ENCODE measurements at regions of chr1 and their contacts with region 1.

Region 1: DNA sequence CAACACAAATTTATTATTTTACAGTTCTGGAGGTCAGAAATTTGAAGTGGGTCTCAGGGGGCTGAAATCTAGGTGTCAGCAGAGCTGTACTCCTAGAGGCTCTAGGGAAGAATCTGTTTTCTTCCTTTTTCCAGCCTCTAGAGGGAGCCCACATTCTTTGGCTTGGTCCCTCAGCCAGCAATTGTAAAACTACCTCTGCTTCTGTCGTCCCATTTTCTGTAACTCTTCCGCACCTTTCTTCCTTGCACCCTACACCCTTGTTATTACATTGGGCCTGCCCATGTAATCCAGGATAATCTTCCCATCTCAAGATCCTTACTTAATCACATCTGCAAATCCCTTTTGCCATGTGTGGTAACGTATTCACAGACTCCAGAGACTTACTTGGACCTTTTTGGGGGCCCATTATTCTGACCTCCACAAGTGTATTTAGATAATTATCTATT is 24.8 kb upstream of the THEM4 start:
- DNase-seq: peak; percentile 88
- ATAC-seq: peak; percentile 75
- H3K4me3 ChIP-seq: no peak overlapping the region
- H3K27ac ChIP-seq: no peak overlapping the region
- H3K4me1 ChIP-seq: peaks cover 27% of the 10 kb centered on the region
- H3K27me3 ChIP-seq: no peaks in the 10 kb centered on the region
- CTCF ChIP-seq: peak; percentile 96

Region 2: DNA sequence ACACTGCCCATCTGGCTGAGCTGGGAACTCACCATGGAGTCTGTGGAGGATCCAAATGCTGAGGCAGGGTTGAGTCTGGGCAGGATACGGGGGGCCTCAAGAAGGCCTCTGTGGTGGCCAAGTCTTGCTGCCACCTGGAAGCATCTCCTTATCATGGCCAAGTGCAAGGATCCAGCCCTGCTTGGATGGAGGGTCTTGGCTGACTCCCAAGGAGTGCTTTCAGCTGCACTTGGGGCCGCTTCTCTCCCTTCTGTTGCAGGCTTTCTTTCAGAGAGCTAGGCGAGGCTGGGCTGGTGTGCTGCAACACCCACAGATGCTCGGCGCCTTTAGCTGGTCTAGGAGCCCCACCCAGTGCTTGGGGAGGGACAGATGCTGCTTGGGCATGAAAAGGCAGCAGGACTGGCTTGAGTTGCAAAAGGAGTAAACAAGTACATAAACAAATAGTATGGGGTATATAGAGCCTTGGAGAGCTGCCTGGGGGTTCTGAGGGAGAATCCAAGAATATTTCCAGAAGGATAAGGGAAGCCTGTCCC is 80.6 kb before region 1 on chr1 and contains the start of gene THEM5:
- CTCF ChIA-PET with region 1: no interaction called
- POLR2A ChIA-PET with region 1: no interaction called
- intact Hi-C with region 1: no loop called
- DNase-seq: no peak
- ATAC-seq: no peak
- H3K4me3 ChIP-seq: no peak within 1 kb of the TSS
- H3K27ac ChIP-seq: no peak within 1 kb of the TSS
- H3K4me1 ChIP-seq: no peaks in the 10 kb centered on the region
- H3K27me3 ChIP-seq: peaks cover 18% of the 10 kb centered on the region
- CTCF ChIP-seq: no peak
- total RNA-seq, gene THEM5: not detected in 2 replicates

Region 3: GRCh38 chr1:151888972-151889570 is 45.0 kb before region 1 on chr1:
- CTCF ChIA-PET with region 1: no interaction called
- POLR2A ChIA-PET with region 1: no interaction called
- intact Hi-C with region 1: loop called (anchors 1 kb)
- DNase-seq: peak; percentile 62
- ATAC-seq: peak; percentile 36; the same call in 1 of the 2 replicates
- H3K4me3 ChIP-seq: no peak overlapping the region
- H3K27ac ChIP-seq: no peak overlapping the region
- H3K4me1 ChIP-seq: peaks cover 26% of the 10 kb centered on the region
- H3K27me3 ChIP-seq: no peaks in the 10 kb centered on the region
- CTCF ChIP-seq: peak; percentile 73

Region 4: DNA sequence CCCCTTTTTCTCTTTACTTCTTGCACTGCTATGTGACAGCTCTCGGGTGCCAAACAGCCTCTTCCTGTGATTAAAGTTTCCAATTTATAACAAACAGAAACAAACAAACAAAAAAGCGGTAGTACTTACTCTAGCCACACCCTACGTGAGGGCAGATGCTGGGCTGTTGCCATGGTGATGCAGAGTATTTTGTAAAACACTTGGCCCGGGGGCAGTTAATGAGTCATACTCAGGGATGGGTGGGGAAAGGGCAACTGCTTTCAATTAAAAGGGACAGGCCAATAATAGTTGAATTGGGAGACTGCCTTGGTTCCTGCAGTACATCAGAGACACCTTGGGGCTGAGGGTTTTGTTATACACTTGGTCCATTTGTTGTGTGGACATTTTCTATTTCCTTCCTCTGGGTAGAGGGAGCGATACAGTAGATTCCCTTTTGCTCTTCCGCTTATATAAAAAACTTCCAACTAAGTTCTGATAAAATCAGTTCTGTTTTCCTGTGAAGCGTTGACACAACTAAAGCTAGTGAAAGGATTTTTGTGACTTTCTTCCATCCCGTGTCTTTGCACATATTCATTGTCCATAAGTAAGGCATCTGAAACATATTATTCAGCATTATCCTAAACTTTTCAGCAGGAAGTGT is 11.8 kb after region 1 on chr1:
- CTCF ChIA-PET with region 1: interaction called, 8 read pairs
- POLR2A ChIA-PET with region 1: interaction called, 5 read pairs
- intact Hi-C with region 1: loop called (anchors 1 kb)
- DNase-seq: peak; percentile 100
- ATAC-seq: peak; percentile 76
- H3K4me3 ChIP-seq: peak overlapping the region; percentile 56
- H3K27ac ChIP-seq: peak overlapping the region; percentile 96
- H3K4me1 ChIP-seq: peaks cover 51% of the 10 kb centered on the region
- H3K27me3 ChIP-seq: no peaks in the 10 kb centered on the region
- CTCF ChIP-seq: no peak

Region 5: GRCh38 chr1:151968058-151968457 is 34.0 kb after region 1 on chr1:
- CTCF ChIA-PET with region 1: interaction called, 32 read pairs
- POLR2A ChIA-PET with region 1: interaction called, 5 read pairs
- intact Hi-C with region 1: loop called (anchors 1 kb)
- DNase-seq: peak; percentile 89
- ATAC-seq: peak; percentile 48
- H3K4me3 ChIP-seq: no peak overlapping the region
- H3K27ac ChIP-seq: no peak overlapping the region
- H3K4me1 ChIP-seq: peaks cover 66% of the 10 kb centered on the region
- H3K27me3 ChIP-seq: no peaks in the 10 kb centered on the region
- CTCF ChIP-seq: peak; percentile 97

Region 6: GRCh38 chr1:151993654-151994496 is 59.8 kb after region 1 on chr1 and contains the start of gene S100A10:
- CTCF ChIA-PET with region 1: interaction called, 10 read pairs
- POLR2A ChIA-PET with region 1: interaction called, 23 read pairs
- intact Hi-C with region 1: no loop called
- DNase-seq: peak; percentile 89
- ATAC-seq: peak; percentile 25
- H3K4me3 ChIP-seq: peak within 1 kb of the TSS; percentile 91
- H3K27ac ChIP-seq: peak within 1 kb of the TSS; percentile 97
- H3K4me1 ChIP-seq: peaks cover 76% of the 10 kb centered on the region
- H3K27me3 ChIP-seq: no peaks in the 10 kb centered on the region
- CTCF ChIP-seq: no peak
- total RNA-seq, gene S100A10: 349 and 400 TPM in 2 replicates

Region 7: GRCh38 chr1:152001391-152002249 is 67.5 kb after region 1 on chr1:
- CTCF ChIA-PET with region 1: interaction called, 46 read pairs
- POLR2A ChIA-PET with region 1: interaction called, 5 read pairs
- intact Hi-C with region 1: loop called (anchors 1 kb)
- DNase-seq: peak; percentile 97
- ATAC-seq: peak; percentile 34
- H3K4me3 ChIP-seq: no peak overlapping the region
- H3K27ac ChIP-seq: no peak overlapping the region
- H3K4me1 ChIP-seq: peaks cover 45% of the 10 kb centered on the region
- H3K27me3 ChIP-seq: no peaks in the 10 kb centered on the region
- CTCF ChIP-seq: peak; percentile 98